AG04450 (cell line): ENCODE measurements at regions of chr7 and their contacts with region 1.

Region 1: GRCh38 chr7:74569501-74570075 is 87.9 kb upstream of the GTF2I start:
- DNase-seq: no peak
- H3K4me3 ChIP-seq: no peak overlapping the region
- H3K27ac ChIP-seq: no peak overlapping the region
- H3K27me3 ChIP-seq: no peaks in the 10 kb centered on the region
- CTCF ChIP-seq: no peak

Region 2: GRCh38 chr7:74449809-74450397 is 119.7 kb before region 1 on chr7:
- CTCF ChIA-PET with region 1: interaction called, 11 read pairs
- POLR2A ChIA-PET with region 1: interaction called, 3 read pairs
- DNase-seq: no peak
- H3K4me3 ChIP-seq: no peak overlapping the region
- H3K27ac ChIP-seq: no peak overlapping the region
- H3K27me3 ChIP-seq: no peaks in the 10 kb centered on the region
- CTCF ChIP-seq: peak; percentile 80

Region 3: GRCh38 chr7:74722153-74722552 is 152.6 kb after region 1 on chr7:
- CTCF ChIA-PET with region 1: no interaction called
- POLR2A ChIA-PET with region 1: no interaction called
- DNase-seq: no peak
- H3K4me3 ChIP-seq: no peak overlapping the region
- H3K27ac ChIP-seq: no peak overlapping the region
- H3K27me3 ChIP-seq: no peaks in the 10 kb centered on the region
- CTCF ChIP-seq: no peak